PC-9 (cell line): ENCODE measurements at regions of chr3 and their contacts with region 1.

Region 1: GRCh38 chr3:124014366-124014942 is 22.5 kb upstream of the ROPN1 start:
- DNase-seq: no peak
- H3K4me3 ChIP-seq: no peak overlapping the region
- H3K27ac ChIP-seq: no peak overlapping the region
- H3K4me1 ChIP-seq: no peaks in the 10 kb centered on the region
- H3K27me3 ChIP-seq: peaks cover 54% of the 10 kb centered on the region
- CTCF ChIP-seq: no peak

Region 2: GRCh38 chr3:124078953-124079911 is 64.8 kb after region 1 on chr3:
- CTCF ChIA-PET with region 1: no interaction called
- POLR2A ChIA-PET with region 1: no interaction called
- intact Hi-C with region 1: loop called (anchors 2 kb)
- DNase-seq: peak in 1 of 2 experiments; percentile 9
- H3K4me3 ChIP-seq: no peak overlapping the region
- H3K27ac ChIP-seq: no peak overlapping the region
- H3K4me1 ChIP-seq: no peaks in the 10 kb centered on the region
- H3K27me3 ChIP-seq: peaks cover 69% of the 10 kb centered on the region
- CTCF ChIP-seq: peak; percentile 84

Region 3: GRCh38 chr3:124281453-124282316 is 267.2 kb after region 1 on chr3:
- CTCF ChIA-PET with region 1: interaction called, 3 read pairs
- POLR2A ChIA-PET with region 1: no interaction called
- intact Hi-C with region 1: loop called (anchors 5 kb)
- DNase-seq: no peak
- H3K4me3 ChIP-seq: no peak overlapping the region
- H3K27ac ChIP-seq: no peak overlapping the region
- H3K4me1 ChIP-seq: no peaks in the 10 kb centered on the region
- H3K27me3 ChIP-seq: peaks cover 31% of the 10 kb centered on the region
- CTCF ChIP-seq: peak; percentile 47; the same call in 1 of the 2 replicates

Region 4: GRCh38 chr3:124467980-124468902 is 453.8 kb after region 1 on chr3:
- CTCF ChIA-PET with region 1: no interaction called
- POLR2A ChIA-PET with region 1: no interaction called
- intact Hi-C with region 1: loop called (anchors 1 kb)
- DNase-seq: peak in 1 of 2 experiments; percentile 49
- H3K4me3 ChIP-seq: no peak overlapping the region
- H3K27ac ChIP-seq: no peak overlapping the region
- H3K4me1 ChIP-seq: no peaks in the 10 kb centered on the region
- H3K27me3 ChIP-seq: peaks cover 61% of the 10 kb centered on the region
- CTCF ChIP-seq: peak; percentile 92